ENCODE measurements at regions of chr6 and their contacts with region 1.

Region 1: GRCh38 chr6:126804332-126805064 is 314.0 kb upstream of the RSPO3 start:
- DNase-seq: peak; percentile 36 to 68
- H3K4me3 ChIP-seq: no peak overlapping the region
- H3K4me3 Mint-ChIP-seq: no peak overlapping the region
- H3K27ac Mint-ChIP-seq: no peak overlapping the region
- H3K4me1 ChIP-seq: peaks cover 36% of the 10 kb centered on the region
- H3K4me1 Mint-ChIP-seq: peaks cover 23% of the 10 kb centered on the region
- H3K27me3 ChIP-seq: no peaks in the 10 kb centered on the region
- H3K27me3 Mint-ChIP-seq: no peaks in the 10 kb centered on the region
- CTCF ChIP-seq: peak; percentile 66 to 71

Region 2: GRCh38 chr6:126926926-126927325 is 122.4 kb after region 1 on chr6:
- CTCF ChIA-PET with region 1: no interaction called
- POLR2A ChIA-PET with region 1: interaction called, 3 read pairs
- intact Hi-C with region 1: loop called (anchors 1 kb)
- DNase-seq: no peak
- H3K4me3 ChIP-seq: no peak overlapping the region
- H3K4me3 Mint-ChIP-seq: no peak overlapping the region
- H3K27ac Mint-ChIP-seq: no peak overlapping the region
- H3K4me1 ChIP-seq: no peaks in the 10 kb centered on the region
- H3K4me1 Mint-ChIP-seq: no peaks in the 10 kb centered on the region
- H3K27me3 ChIP-seq: no peaks in the 10 kb centered on the region
- H3K27me3 Mint-ChIP-seq: no peaks in the 10 kb centered on the region
- CTCF ChIP-seq: no peak

Region 3: GRCh38 chr6:127069659-127070279 is 265.3 kb after region 1 on chr6:
- CTCF ChIA-PET with region 1: no interaction called
- POLR2A ChIA-PET with region 1: no interaction called
- intact Hi-C with region 1: loop called (anchors 1 kb)
- DNase-seq: peak in 1 of 2 experiments; percentile 47
- H3K4me3 ChIP-seq: no peak overlapping the region
- H3K4me3 Mint-ChIP-seq: no peak overlapping the region
- H3K27ac Mint-ChIP-seq: no peak overlapping the region
- H3K4me1 ChIP-seq: no peaks in the 10 kb centered on the region
- H3K4me1 Mint-ChIP-seq: peaks cover 14% of the 10 kb centered on the region
- H3K27me3 ChIP-seq: no peaks in the 10 kb centered on the region
- H3K27me3 Mint-ChIP-seq: no peaks in the 10 kb centered on the region
- CTCF ChIP-seq: peak; percentile 50 to 56

Region 4: DNA sequence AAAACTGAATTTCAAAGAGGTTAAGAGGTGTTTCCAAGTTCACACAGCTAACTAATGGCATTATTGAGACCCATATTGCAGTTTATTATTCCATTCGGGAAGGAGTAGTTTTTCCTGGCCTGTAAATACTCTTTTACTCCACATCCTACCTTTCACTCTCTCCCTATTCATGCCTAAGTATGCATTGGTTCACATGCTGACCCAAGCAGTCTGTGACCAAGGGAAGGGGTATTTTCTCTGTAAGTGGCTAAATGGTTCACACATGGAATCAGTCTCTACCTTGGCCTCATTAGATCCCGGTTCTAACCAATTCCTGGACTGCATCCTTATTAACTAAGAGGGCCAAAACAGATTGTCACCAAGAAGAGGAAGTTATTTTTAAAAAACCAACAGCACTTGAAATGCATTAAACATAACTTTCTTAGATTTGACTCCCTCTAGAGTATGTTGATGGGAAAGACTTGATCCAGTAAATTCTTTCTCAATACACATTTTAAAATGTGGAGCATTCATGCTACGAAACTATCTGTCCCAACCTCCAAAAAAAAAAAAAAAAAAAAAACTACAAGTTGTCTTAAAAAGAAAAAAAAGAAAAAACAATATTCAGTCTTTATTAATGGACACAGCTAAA is 296.1 kb after region 1 on chr6:
- CTCF ChIA-PET with region 1: interaction called, 3 read pairs
- POLR2A ChIA-PET with region 1: no interaction called
- intact Hi-C with region 1: loop called (anchors 1 kb)
- DNase-seq: no peak
- H3K4me3 ChIP-seq: no peak overlapping the region
- H3K4me3 Mint-ChIP-seq: no peak overlapping the region
- H3K27ac Mint-ChIP-seq: no peak overlapping the region
- H3K4me1 ChIP-seq: peaks cover 5% of the 10 kb centered on the region
- H3K4me1 Mint-ChIP-seq: peaks cover 5% of the 10 kb centered on the region
- H3K27me3 ChIP-seq: no peaks in the 10 kb centered on the region
- H3K27me3 Mint-ChIP-seq: no peaks in the 10 kb centered on the region
- CTCF ChIP-seq: peak; percentile 34 to 36

Region 5: GRCh38 chr6:127115746-127116145 is 311.2 kb after region 1 on chr6:
- CTCF ChIA-PET with region 1: interaction called, 4 read pairs
- POLR2A ChIA-PET with region 1: no interaction called
- intact Hi-C with region 1: loop called (anchors 1 kb)
- DNase-seq: no peak
- H3K4me3 ChIP-seq: no peak overlapping the region
- H3K4me3 Mint-ChIP-seq: no peak overlapping the region
- H3K27ac Mint-ChIP-seq: no peak overlapping the region
- H3K4me1 ChIP-seq: 0 out of 2 replicates have a peak, but pooled peaks cover 10% of the 10 kb centered on the region
- H3K4me1 Mint-ChIP-seq: peaks cover 19% of the 10 kb centered on the region
- H3K27me3 ChIP-seq: no peaks in the 10 kb centered on the region
- H3K27me3 Mint-ChIP-seq: no peaks in the 10 kb centered on the region
- CTCF ChIP-seq: no peak

Region 6: DNA sequence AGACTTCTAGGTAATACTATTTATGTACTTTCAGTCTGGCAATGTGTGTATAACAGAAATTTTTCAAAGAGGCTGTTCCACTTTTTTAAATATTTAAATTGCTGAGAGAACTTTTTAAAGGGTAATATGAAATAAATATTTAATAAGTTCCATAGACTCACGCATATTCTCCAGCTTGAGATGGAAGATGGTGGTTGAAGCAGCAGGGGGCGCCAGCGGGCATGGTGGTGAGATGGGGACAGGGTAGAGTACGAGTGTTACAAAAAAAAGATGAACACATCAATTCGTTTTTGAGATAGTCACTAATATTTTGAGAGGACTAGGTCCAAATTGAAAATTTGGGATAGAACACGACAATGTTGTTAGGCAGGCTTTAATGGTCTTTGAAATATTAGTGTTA is 382.4 kb after region 1 on chr6:
- CTCF ChIA-PET with region 1: interaction called, 3 read pairs
- POLR2A ChIA-PET with region 1: no interaction called
- intact Hi-C with region 1: loop called (anchors 10 kb)
- DNase-seq: peak; percentile 48 to 69
- H3K4me3 ChIP-seq: no peak overlapping the region
- H3K4me3 Mint-ChIP-seq: no peak overlapping the region
- H3K27ac Mint-ChIP-seq: no peak overlapping the region
- H3K4me1 ChIP-seq: no peaks in the 10 kb centered on the region
- H3K4me1 Mint-ChIP-seq: no peaks in the 10 kb centered on the region
- H3K27me3 ChIP-seq: no peaks in the 10 kb centered on the region
- H3K27me3 Mint-ChIP-seq: peaks cover 3% of the 10 kb centered on the region
- CTCF ChIP-seq: peak; percentile 48 to 54

Measured in Caco-2 (cell line).